ENCODE measurements at regions of chr5 and their contacts with region 1.

Region 1: DNA sequence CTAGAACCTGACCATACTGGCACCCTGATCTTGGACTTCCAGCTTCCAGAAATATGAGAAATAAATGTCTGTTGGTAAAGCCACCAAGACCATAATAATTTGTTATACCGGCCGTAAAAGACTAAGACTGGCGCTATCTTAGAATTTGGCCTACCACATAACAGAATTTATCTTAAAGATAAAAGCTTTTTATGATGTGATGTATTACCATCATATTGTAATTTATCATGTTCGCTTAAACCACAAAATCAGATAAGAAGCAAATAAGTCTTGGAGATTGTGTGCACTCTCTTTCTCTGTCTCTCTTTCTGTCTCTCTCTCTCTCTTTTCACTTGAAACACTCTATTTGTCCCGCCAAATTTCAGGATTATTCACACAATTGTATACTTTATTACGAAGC is 35.6 kb downstream of the FST start:
- DNase-seq: no peak
- ATAC-seq: no peak
- H3K4me3 ChIP-seq: no peak overlapping the region
- H3K4me3 Mint-ChIP-seq: no peak overlapping the region
- H3K27ac ChIP-seq: no peak overlapping the region
- H3K27ac Mint-ChIP-seq: no peak overlapping the region
- H3K4me1 ChIP-seq: no peaks in the 10 kb centered on the region
- H3K4me1 Mint-ChIP-seq: no peaks in the 10 kb centered on the region
- H3K27me3 ChIP-seq: peaks cover 0 to 8% of the 10 kb centered on the region in 2 experiments
- H3K27me3 Mint-ChIP-seq: peaks cover 0 to 18% of the 10 kb centered on the region in 2 donors

Region 2: DNA sequence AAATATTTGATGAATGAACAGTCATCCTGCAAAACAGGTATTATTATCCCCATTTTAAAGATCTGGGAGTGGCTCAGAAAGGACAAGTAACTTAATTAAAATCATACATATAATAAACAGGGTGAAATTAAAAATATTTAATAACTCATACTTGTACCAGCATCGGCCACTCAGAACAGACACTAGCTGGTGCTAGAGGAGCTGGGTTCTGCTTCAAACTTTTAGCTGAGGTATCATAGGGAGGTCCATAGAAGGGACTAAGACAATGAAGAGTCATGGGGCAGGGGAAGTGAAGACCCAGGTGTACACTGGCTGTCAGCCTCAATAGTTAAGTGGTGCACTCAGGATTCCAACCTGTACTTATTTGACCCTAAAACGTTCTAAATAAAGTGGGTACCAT is 1992.5 kb after region 1 on chr5:
- CTCF ChIA-PET with region 1: interaction called in 1 of 2 experiments, 10 read pairs
- POLR2A ChIA-PET with region 1: no interaction called
- DNase-seq: no peak
- ATAC-seq: no peak
- H3K4me3 ChIP-seq: no peak overlapping the region
- H3K4me3 Mint-ChIP-seq: no peak overlapping the region
- H3K27ac ChIP-seq: no peak overlapping the region
- H3K27ac Mint-ChIP-seq: no peak overlapping the region
- H3K4me1 ChIP-seq: no peaks in the 10 kb centered on the region
- H3K4me1 Mint-ChIP-seq: peaks cover 15 to 16% (median 15%) of the 10 kb centered on the region in 3 donors
- H3K27me3 ChIP-seq: no peaks in the 10 kb centered on the region
- H3K27me3 Mint-ChIP-seq: no peaks in the 10 kb centered on the region